ENCODE measurements at regions of chr1 and their contacts with region 1.

Region 1: DNA sequence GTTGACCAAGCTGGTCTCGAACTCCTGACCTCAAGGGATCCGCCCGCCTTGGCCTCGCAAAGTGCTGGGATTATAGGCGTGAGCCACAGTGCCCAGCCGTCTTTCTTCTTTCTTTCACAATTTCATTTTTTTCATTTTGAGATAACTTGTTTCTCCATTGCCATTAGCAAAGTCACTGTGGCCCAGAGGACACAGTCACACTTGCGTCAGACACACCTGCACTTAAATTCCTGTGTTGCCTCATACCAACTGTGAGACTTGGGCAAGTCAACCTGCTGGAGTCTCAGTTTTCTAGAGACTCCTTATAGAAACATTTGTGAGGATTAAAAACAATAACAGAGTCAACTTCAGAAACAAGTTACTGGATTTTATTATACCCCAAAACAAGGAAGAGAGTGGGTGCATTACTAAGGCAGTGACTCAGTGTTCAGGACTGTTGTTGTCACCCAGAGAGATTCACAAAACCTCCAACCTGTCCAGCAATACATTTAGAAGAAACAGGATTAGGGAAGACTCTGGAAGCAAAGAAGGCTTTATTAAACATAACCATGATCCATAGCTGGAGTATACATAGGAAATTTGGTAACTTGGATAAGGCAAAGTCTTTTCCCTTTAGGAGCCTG is 2.6 kb downstream of the TEDDM1 start:
- DNase-seq: no peak
- H3K4me3 ChIP-seq: no peak overlapping the region
- H3K4me3 Mint-ChIP-seq: no peak overlapping the region
- H3K27ac ChIP-seq: no peak overlapping the region
- H3K27ac Mint-ChIP-seq: peak overlapping the region in 2 of 7 donors; percentile 13 to 60
- H3K4me1 ChIP-seq: peaks cover 5% of the 10 kb centered on the region
- H3K4me1 Mint-ChIP-seq: peaks cover 5 to 12% (median 8%) of the 10 kb centered on the region in 4 donors
- H3K27me3 ChIP-seq: no peaks in the 10 kb centered on the region
- H3K27me3 Mint-ChIP-seq: no peaks in the 10 kb centered on the region

Region 2: DNA sequence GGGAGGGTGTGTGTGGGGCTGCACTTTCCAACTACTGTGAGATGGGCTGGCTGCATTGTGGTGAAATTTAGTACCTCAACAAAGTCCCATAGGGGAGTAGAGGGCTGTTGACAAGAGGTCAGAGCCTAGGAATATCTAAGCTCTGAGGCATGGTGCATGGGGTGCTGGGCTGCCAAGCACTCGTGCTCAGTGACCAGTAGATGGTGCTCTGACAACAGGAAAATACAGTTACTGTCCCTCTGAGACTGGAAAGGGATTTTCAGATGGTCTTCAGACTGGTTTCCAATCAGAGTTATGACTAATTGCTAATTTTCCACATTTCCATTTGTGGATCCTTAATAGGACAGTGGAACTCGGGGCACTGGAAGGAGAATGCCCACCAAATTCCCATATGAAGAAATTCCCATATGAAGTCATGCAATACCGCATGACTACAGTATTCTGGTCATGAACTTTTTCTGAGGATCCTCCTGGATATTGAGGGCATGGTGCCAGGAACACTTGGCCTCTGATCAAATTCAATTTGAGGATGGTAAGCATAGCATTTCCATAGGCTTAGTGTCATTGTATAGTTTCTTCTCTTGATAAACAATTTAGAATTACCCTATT is 918.6 kb before region 1 on chr1:
- CTCF ChIA-PET with region 1: no interaction called
- POLR2A ChIA-PET with region 1: no interaction called
- intact Hi-C with region 1: loop called (anchors 2 kb)
- DNase-seq: peak in 3 of 5 donors; percentile 18 to 31 (median 19)
- H3K4me3 ChIP-seq: no peak overlapping the region
- H3K4me3 Mint-ChIP-seq: no peak overlapping the region
- H3K27ac ChIP-seq: no peak overlapping the region
- H3K27ac Mint-ChIP-seq: no peak overlapping the region
- H3K4me1 ChIP-seq: peaks cover 10% of the 10 kb centered on the region
- H3K4me1 Mint-ChIP-seq: peaks cover 1 to 13% (median 6%) of the 10 kb centered on the region in 4 donors
- H3K27me3 ChIP-seq: peaks cover 10% of the 10 kb centered on the region
- H3K27me3 Mint-ChIP-seq: peaks cover 24 to 27% of the 10 kb centered on the region in 2 donors

Region 3: DNA sequence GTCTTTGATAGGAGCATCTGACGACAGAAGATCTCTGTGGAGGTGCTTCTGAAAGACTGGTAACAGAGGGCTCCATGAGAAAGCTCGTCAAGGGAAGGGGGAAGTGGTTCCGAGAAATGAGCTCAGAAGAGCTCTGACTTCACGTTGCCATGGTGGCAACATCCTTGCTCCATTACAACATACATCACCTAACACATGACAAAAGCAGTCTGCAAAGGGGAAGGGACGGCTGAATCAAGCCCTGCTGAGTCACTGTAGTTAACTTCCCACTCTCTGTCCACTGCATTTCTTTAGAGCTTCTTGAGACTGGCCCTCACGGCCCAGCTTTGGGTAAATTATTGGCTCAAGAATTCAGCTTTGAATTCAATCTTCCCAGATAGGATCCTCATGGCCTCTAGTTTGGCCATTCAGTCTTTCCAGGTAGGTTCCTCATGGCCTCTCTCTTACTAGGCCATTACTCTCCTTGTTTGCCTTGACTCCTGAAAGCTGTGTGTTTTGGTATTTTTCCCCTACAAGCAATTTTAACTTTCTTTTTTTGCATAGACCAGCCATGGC is 248.4 kb before region 1 on chr1:
- CTCF ChIA-PET with region 1: interaction called, 357 read pairs
- POLR2A ChIA-PET with region 1: interaction called, 3 read pairs
- intact Hi-C with region 1: no loop called
- DNase-seq: peak in 2 of 5 donors; percentile 9 to 12
- H3K4me3 ChIP-seq: no peak overlapping the region
- H3K4me3 Mint-ChIP-seq: no peak overlapping the region
- H3K27ac ChIP-seq: no peak overlapping the region
- H3K27ac Mint-ChIP-seq: no peak overlapping the region
- H3K4me1 ChIP-seq: peaks cover 3% of the 10 kb centered on the region
- H3K4me1 Mint-ChIP-seq: peaks cover 0 to 5% (median 2%) of the 10 kb centered on the region in 4 donors
- H3K27me3 ChIP-seq: no peaks in the 10 kb centered on the region
- H3K27me3 Mint-ChIP-seq: no peaks in the 10 kb centered on the region

Region 4: DNA sequence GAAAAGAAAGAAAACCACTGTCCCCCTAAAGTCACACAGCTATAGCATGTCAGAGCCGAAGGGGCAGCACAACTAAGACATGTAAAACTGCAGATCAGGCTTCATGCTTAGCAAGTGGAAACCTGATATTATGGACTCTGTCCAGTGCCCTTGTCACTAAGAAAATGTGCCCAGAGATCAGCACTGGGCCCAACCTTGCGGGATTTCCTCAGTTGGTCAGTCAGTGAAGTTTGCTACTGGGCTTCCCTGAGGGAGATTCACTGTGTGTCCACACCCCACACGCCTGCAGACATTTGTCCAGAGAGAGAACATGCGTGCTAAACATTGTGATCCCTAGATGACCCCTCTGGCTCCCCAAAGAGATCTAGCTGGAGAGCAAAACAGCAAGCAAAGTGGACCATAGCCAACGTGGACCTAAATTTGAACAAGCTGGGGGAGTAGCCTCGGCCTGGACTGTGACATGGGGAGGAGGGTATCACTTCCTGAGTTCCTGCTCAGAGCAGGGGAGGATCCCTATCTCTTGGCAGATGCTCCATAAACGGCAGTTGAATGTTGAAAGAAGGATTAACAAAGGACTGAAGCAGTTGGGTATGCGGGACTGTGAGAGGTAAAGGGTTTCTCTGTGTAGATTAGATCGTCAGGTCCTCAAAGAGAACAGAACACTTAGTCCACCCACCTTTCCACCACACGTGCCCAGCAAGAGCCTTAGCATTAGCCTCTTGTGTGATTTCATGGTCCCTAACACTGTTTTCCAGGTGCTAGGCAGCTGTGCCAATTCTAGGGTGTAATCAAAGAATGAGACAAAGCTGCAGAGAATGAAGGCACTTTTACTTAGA is 59.9 kb before region 1 on chr1:
- CTCF ChIA-PET with region 1: no interaction called
- POLR2A ChIA-PET with region 1: no interaction called
- intact Hi-C with region 1: no loop called
- DNase-seq: no peak
- H3K4me3 ChIP-seq: no peak overlapping the region
- H3K4me3 Mint-ChIP-seq: no peak overlapping the region
- H3K27ac ChIP-seq: no peak overlapping the region
- H3K27ac Mint-ChIP-seq: peak overlapping the region in 1 of 7 donors; percentile 50
- H3K4me1 ChIP-seq: no peaks in the 10 kb centered on the region
- H3K4me1 Mint-ChIP-seq: peaks cover 0 to 1% (median 0%) of the 10 kb centered on the region in 4 donors
- H3K27me3 ChIP-seq: no peaks in the 10 kb centered on the region
- H3K27me3 Mint-ChIP-seq: peaks cover 0 to 2% of the 10 kb centered on the region in 2 donors

Region 5: DNA sequence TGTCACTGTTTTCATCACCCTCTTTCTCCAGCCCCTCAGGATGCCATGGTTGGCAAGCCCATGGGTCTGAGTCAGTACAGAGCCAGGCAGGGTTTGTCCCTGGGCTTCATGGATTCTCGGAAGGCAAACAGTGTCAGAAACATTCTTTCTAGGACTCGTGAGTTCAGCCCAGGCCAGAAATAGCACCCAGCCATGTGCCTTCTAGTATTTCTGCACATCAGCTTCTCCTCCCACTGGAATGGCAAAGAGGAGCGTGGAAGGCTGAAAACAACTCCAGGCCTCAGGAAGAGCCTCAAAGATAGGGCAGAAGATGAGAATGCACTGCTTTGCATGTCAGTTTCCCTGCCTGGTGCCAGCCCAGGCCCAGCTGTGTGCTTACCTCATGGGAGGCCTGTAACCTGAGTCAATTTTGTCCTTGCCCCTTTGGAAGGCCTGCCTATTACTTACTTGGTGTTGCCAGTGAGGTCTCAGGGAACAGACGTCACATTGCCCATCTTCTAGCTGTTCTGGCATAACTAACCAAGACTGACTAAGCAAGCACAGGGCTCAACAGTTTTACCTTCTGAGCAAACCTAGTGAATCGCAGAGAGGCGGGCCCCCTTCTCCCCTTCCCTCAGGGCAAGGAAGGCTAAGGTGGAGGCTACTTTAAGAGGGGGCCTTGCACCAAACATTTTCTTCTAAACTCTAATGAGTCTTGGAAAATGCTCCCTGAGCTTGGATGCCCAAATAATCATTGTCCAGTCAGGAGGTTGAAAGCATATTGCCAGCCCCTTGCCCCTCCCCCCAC is 48.7 kb before region 1 on chr1:
- CTCF ChIA-PET with region 1: no interaction called
- POLR2A ChIA-PET with region 1: no interaction called
- intact Hi-C with region 1: no loop called
- DNase-seq: no peak
- H3K4me3 ChIP-seq: no peak overlapping the region
- H3K4me3 Mint-ChIP-seq: no peak overlapping the region
- H3K27ac ChIP-seq: no peak overlapping the region
- H3K27ac Mint-ChIP-seq: no peak overlapping the region
- H3K4me1 ChIP-seq: no peaks in the 10 kb centered on the region
- H3K4me1 Mint-ChIP-seq: no peaks in the 10 kb centered on the region
- H3K27me3 ChIP-seq: no peaks in the 10 kb centered on the region
- H3K27me3 Mint-ChIP-seq: peaks cover 2 to 6% of the 10 kb centered on the region in 2 donors

Region 6: DNA sequence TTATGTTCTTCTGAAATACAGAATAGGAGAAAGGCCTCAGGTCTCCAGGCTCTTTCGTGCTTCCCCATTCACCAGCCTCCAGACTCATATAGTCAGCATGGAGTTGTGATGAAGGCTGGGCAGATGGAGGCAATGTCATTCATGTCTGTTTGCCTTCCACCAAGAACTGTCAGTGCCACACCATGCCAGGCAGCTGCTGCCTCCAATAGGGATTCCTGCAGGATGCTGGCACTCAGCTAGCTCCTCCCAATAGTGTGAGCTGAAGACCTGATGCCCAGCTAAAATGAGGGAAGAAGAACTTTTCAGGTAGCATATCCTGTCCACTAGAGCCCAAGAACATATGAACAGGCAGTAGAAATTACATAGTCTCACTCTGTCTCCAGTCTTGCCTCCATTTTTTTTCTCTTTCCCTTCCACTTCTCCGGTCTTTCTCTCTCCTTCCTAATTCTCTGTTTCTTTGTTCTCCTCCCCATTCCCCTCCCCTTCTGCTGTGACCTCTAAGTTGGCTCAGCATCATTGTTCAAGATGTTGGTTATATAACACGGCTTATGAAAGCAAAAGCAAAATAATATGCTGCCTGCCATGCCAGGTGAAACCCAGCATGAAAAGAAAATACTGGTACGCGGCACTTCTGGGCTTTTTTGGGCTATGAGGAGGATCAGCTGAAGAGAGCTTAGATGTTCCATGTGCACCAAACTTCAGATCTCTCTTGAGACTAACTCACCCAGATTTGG is 23.6 kb before region 1 on chr1:
- CTCF ChIA-PET with region 1: no interaction called
- POLR2A ChIA-PET with region 1: no interaction called
- intact Hi-C with region 1: no loop called
- DNase-seq: no peak
- H3K4me3 ChIP-seq: no peak overlapping the region
- H3K4me3 Mint-ChIP-seq: no peak overlapping the region
- H3K27ac ChIP-seq: no peak overlapping the region
- H3K27ac Mint-ChIP-seq: no peak overlapping the region
- H3K4me1 ChIP-seq: no peaks in the 10 kb centered on the region
- H3K4me1 Mint-ChIP-seq: no peaks in the 10 kb centered on the region
- H3K27me3 ChIP-seq: no peaks in the 10 kb centered on the region
- H3K27me3 Mint-ChIP-seq: no peaks in the 10 kb centered on the region

Region 7: GRCh38 chr1:184387476-184388318 is 1989.8 kb after region 1 on chr1:
- CTCF ChIA-PET with region 1: no interaction called
- POLR2A ChIA-PET with region 1: no interaction called
- intact Hi-C with region 1: no loop called
- DNase-seq: peak in 4 of 5 donors; percentile 8 to 47 (median 26)
- H3K4me3 ChIP-seq: peak overlapping the region in 1 of 2 donors; percentile 22
- H3K4me3 Mint-ChIP-seq: peak overlapping the region; percentile 78 to 89 (median 84)
- H3K27ac ChIP-seq: no peak overlapping the region
- H3K27ac Mint-ChIP-seq: peak overlapping the region in 4 of 7 donors; percentile 5 to 71 (median 27)
- H3K4me1 ChIP-seq: peaks cover 9% of the 10 kb centered on the region
- H3K4me1 Mint-ChIP-seq: peaks cover 11 to 24% (median 19%) of the 10 kb centered on the region in 4 donors
- H3K27me3 ChIP-seq: peaks cover 7% of the 10 kb centered on the region
- H3K27me3 Mint-ChIP-seq: peaks cover 37 to 52% of the 10 kb centered on the region in 2 donors

Measured in CD4-positive, alpha-beta memory T cell (primary cell).